ENCODE measurements at regions of chr17 and their contacts with region 1.

Region 1: GRCh38 chr17:76714822-76715495 is 4.2 kb upstream of the MXRA7 start:
- DNase-seq: peak; percentile 85 to 90
- H3K4me3 ChIP-seq: no peak overlapping the region
- H3K27ac ChIP-seq: peak overlapping the region; percentile 6 to 47 (median 11)
- H3K4me1 ChIP-seq: peaks cover 8 to 31% of the 10 kb centered on the region in 2 donors
- H3K27me3 ChIP-seq: no peaks in the 10 kb centered on the region
- CTCF ChIP-seq: peak; percentile 71 to 84 (median 78)
- POLR2A ChIP-seq: no peak

Region 2: GRCh38 chr17:76557368-76558197 is 157.4 kb before region 1 on chr17:
- intact Hi-C with region 1: loop called (anchors 10 kb)
- DNase-seq: peak; percentile 95
- H3K4me3 ChIP-seq: peak overlapping the region; percentile 24 to 50 (median 46)
- H3K27ac ChIP-seq: peak overlapping the region; percentile 80 to 92 (median 90)
- H3K4me1 ChIP-seq: peaks cover 39 to 65% of the 10 kb centered on the region in 2 donors
- H3K27me3 ChIP-seq: no peaks in the 10 kb centered on the region
- CTCF ChIP-seq: peak in 5 of 6 experiments; percentile 25 to 69 (median 57)
- POLR2A ChIP-seq: peak; percentile 39 to 91

Region 3: GRCh38 chr17:76623271-76624146 is 91.5 kb before region 1 on chr17:
- intact Hi-C with region 1: loop called (anchors 10 kb)
- DNase-seq: peak; percentile 72 to 78
- H3K4me3 ChIP-seq: no peak overlapping the region
- H3K27ac ChIP-seq: no peak overlapping the region
- H3K4me1 ChIP-seq: no peaks in the 10 kb centered on the region
- H3K27me3 ChIP-seq: no peaks in the 10 kb centered on the region
- CTCF ChIP-seq: peak; percentile 69 to 98 (median 90)
- POLR2A ChIP-seq: no peak

Measured in thyroid gland (tissue), 4 donors.